IMR-90 (cell line): ENCODE measurements at regions of chr18 and their contacts with region 1.

Region 1: GRCh38 chr18:9095297-9096006 is 7.0 kb upstream of the NDUFV2 start:
- DNase-seq: peak; percentile 81
- ATAC-seq: peak; percentile 21
- H3K4me3 ChIP-seq: no peak overlapping the region
- H3K27ac ChIP-seq: peak overlapping the region; percentile 84
- H3K4me1 ChIP-seq: peaks cover 13% of the 10 kb centered on the region
- H3K27me3 ChIP-seq: no peaks in the 10 kb centered on the region
- CTCF ChIP-seq: no peak
- POLR2A ChIP-seq: no peak
- RAD21 ChIP-seq: no peak

Region 2: DNA sequence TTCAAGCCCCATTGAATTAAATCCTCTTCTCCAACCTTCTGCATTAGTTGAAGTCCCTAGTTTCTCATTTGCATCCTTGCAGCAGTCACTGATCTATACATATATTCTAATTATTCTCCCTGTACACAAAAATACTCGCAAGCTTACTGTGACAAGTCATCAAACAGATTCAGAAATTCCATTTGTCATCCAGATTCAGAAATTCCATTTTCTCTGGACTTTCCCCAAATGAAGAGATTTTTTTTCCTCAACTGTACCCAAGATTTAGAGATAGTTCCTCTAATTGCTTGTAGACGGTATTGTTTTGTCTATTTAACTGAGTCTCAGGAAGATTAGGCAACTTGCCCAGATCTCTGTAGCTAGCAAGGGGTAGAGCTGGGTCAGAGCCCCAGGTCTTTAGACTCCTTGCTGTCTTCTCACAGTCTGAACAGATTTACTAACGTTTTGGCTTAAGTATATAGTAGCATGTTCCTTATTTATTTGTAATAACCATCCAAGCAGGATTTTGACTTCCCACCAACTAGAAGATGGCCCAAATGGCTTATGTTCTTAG is 452.1 kb before region 1 on chr18:
- CTCF ChIA-PET with region 1: interaction called, 11 read pairs
- POLR2A ChIA-PET with region 1: no interaction called
- dilution Hi-C with region 1: no loop called
- in situ Hi-C with region 1: no loop called
- intact Hi-C with region 1: no loop called
- DNase-seq: no peak
- ATAC-seq: peak; percentile 27; the same call in 1 of the 2 replicates
- H3K4me3 ChIP-seq: no peak overlapping the region
- H3K27ac ChIP-seq: no peak overlapping the region
- H3K4me1 ChIP-seq: no peaks in the 10 kb centered on the region
- H3K27me3 ChIP-seq: no peaks in the 10 kb centered on the region
- CTCF ChIP-seq: no peak
- POLR2A ChIP-seq: no peak
- RAD21 ChIP-seq: no peak

Region 3: GRCh38 chr18:9708057-9708433 is 612.6 kb after region 1 on chr18 and contains the start of gene RAB31:
- CTCF ChIA-PET with region 1: no interaction called
- POLR2A ChIA-PET with region 1: no interaction called
- dilution Hi-C with region 1: no loop called
- in situ Hi-C with region 1: no loop called
- intact Hi-C with region 1: no loop called
- DNase-seq: peak; percentile 72
- ATAC-seq: peak; percentile 96
- H3K4me3 ChIP-seq: peak within 1 kb of the TSS; percentile 89
- H3K27ac ChIP-seq: peak within 1 kb of the TSS; percentile 92
- H3K4me1 ChIP-seq: peaks cover 26% of the 10 kb centered on the region
- H3K27me3 ChIP-seq: no peaks in the 10 kb centered on the region
- CTCF ChIP-seq: peak; percentile 19; the same call in 1 of the 2 replicates
- POLR2A ChIP-seq: peak; percentile 95
- RAD21 ChIP-seq: no peak; the same call in 1 of the 2 replicates
- total RNA-seq, gene RAB31: 26.9 and 28.9 TPM in 2 replicates